PC-9 (cell line): ENCODE measurements at regions of chr19 and their contacts with region 1.

Region 1: GRCh38 chr19:46256855-46257254 is 27.3 kb downstream of the IGFL1 start:
- DNase-seq: peak in 1 of 2 experiments; percentile 50
- H3K4me3 ChIP-seq: no peak overlapping the region
- H3K27ac ChIP-seq: peak overlapping the region; percentile 49
- H3K4me1 ChIP-seq: peaks cover 75% of the 10 kb centered on the region
- H3K27me3 ChIP-seq: no peaks in the 10 kb centered on the region
- CTCF ChIP-seq: no peak

Region 2: GRCh38 chr19:46201413-46202310 is 55.2 kb before region 1 on chr19:
- CTCF ChIA-PET with region 1: interaction called, 25 read pairs
- POLR2A ChIA-PET with region 1: no interaction called
- intact Hi-C with region 1: loop called (anchors 1 kb)
- DNase-seq: peak; percentile 78 to 90
- H3K4me3 ChIP-seq: peak overlapping the region; percentile 65
- H3K27ac ChIP-seq: peak overlapping the region; percentile 97
- H3K4me1 ChIP-seq: peaks cover 85% of the 10 kb centered on the region
- H3K27me3 ChIP-seq: no peaks in the 10 kb centered on the region
- CTCF ChIP-seq: no peak